ENCODE measurements at regions of chr17 and their contacts with region 1.

Region 1: DNA sequence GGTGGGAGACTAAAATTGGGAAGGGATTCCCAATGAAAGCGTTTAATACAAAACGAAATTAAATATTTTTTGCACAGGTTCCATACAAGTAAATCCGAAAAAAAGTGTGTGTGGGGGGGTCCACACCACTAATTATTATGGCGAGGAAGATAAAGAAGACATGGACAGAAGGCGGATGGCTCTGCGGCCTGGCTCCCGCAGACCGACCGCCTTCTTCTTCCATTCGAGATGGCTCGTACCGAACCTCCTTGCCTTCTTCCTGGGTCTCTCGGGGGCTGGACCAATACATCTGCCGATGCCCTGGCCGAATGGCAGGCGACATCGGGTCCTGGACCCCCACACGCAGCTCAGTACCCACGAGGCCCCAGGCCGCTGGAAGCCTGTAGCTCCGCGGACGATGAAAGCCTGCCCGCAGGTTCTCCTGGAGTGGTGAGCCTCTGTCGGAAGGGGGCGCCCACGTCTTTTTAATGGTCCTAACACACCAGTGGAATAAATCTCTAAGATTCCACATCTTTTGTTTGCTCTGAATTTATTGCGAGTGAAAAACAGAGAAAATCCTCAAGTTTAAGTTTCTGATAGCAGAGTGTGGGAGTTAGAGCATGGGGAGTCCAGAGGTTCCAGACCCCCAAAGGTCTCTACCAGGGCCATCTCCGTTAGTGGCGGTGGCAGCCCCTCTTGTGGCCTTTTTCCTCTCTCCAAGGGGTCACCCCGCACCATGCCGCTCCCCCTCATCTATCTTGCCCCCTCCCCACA is 1.4 kb downstream of the PRAC2 start:
- DNase-seq: peak; percentile 91
- ATAC-seq: peak; percentile 70
- H3K4me3 Mint-ChIP-seq: peak overlapping the region; percentile 40
- H3K27ac Mint-ChIP-seq: no peak overlapping the region
- H3K4me1 Mint-ChIP-seq: peaks cover 29% of the 10 kb centered on the region
- H3K27me3 Mint-ChIP-seq: peaks cover 88% of the 10 kb centered on the region
- CTCF ChIP-seq: peak; percentile 80

Region 2: GRCh38 chr17:48625495-48626244 is 98.8 kb before region 1 on chr17:
- CTCF ChIA-PET with region 1: no interaction called
- POLR2A ChIA-PET with region 1: no interaction called
- intact Hi-C with region 1: no loop called
- DNase-seq: peak; percentile 55
- ATAC-seq: peak; percentile 58
- H3K4me3 Mint-ChIP-seq: peak overlapping the region; percentile 77
- H3K27ac Mint-ChIP-seq: peak overlapping the region; percentile 52
- H3K4me1 Mint-ChIP-seq: peaks cover 8% of the 10 kb centered on the region
- H3K27me3 Mint-ChIP-seq: peaks cover 77% of the 10 kb centered on the region
- CTCF ChIP-seq: no peak

Region 3: GRCh38 chr17:48738803-48739526 is 14.5 kb after region 1 on chr17:
- CTCF ChIA-PET with region 1: interaction called, 82 read pairs
- POLR2A ChIA-PET with region 1: interaction called, 3 read pairs
- intact Hi-C with region 1: no loop called
- DNase-seq: no peak
- ATAC-seq: no peak
- H3K4me3 Mint-ChIP-seq: no peak overlapping the region
- H3K27ac Mint-ChIP-seq: no peak overlapping the region
- H3K4me1 Mint-ChIP-seq: peaks cover 9% of the 10 kb centered on the region
- H3K27me3 Mint-ChIP-seq: peaks cover 87% of the 10 kb centered on the region
- CTCF ChIP-seq: no peak

Region 4: GRCh38 chr17:48751172-48751571 is 26.7 kb after region 1 on chr17:
- CTCF ChIA-PET with region 1: interaction called, 55 read pairs
- POLR2A ChIA-PET with region 1: interaction called, 5 read pairs
- intact Hi-C with region 1: loop called (anchors 5 kb)
- DNase-seq: no peak
- ATAC-seq: no peak
- H3K4me3 Mint-ChIP-seq: no peak overlapping the region
- H3K27ac Mint-ChIP-seq: no peak overlapping the region
- H3K4me1 Mint-ChIP-seq: peaks cover 2% of the 10 kb centered on the region
- H3K27me3 Mint-ChIP-seq: peaks cover 87% of the 10 kb centered on the region
- CTCF ChIP-seq: no peak

Region 5: DNA sequence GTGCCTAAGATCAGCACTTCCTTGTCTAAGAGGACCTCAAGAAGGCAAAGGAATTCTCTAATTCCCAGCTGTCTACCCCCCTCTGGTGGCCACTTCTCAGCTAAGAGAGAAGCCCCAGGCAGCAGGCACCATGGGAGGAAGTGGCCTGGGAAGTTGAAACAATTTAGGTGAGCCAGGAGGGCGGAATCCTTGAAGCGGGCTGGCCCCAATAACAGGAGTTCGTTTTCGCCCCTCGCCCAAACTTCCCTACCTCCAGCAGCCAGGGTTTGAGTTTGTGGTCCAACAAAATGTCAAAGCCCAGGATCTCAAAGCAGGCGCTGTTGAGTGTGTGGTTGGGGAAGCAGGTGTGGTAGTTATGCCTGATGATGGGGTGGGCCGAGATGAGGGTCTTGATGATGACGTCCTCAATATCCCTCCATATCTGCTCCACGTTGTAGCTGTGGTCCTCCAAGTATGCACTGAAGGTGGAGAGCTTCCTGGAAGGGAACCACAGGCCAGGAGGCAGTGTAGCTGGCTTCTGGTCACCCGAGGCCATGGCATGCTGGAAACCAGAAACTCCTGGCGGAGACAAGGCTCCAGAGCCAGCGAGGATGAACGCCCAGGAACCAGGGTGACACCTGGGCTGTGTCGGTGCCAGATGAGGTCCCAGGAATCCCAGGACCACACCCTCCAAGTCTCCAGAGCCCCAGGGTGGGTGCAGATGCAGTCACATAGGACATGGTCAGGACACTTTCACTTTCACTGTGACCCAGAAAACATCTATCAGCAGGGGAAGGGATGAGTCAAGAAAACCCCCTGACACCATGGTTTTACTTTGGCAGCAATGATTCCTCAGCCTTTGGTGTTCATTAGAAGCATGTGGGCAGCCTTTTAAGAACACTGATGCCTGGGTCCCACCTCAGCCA is 67.0 kb after region 1 on chr17:
- CTCF ChIA-PET with region 1: interaction called, 78 read pairs
- POLR2A ChIA-PET with region 1: no interaction called
- intact Hi-C with region 1: loop called (anchors 5 kb)
- DNase-seq: peak; percentile 53
- ATAC-seq: peak; percentile 85
- H3K4me3 Mint-ChIP-seq: no peak overlapping the region
- H3K27ac Mint-ChIP-seq: no peak overlapping the region
- H3K4me1 Mint-ChIP-seq: peaks cover 11% of the 10 kb centered on the region
- H3K27me3 Mint-ChIP-seq: peaks cover 18% of the 10 kb centered on the region
- CTCF ChIP-seq: peak; percentile 40

Region 6: DNA sequence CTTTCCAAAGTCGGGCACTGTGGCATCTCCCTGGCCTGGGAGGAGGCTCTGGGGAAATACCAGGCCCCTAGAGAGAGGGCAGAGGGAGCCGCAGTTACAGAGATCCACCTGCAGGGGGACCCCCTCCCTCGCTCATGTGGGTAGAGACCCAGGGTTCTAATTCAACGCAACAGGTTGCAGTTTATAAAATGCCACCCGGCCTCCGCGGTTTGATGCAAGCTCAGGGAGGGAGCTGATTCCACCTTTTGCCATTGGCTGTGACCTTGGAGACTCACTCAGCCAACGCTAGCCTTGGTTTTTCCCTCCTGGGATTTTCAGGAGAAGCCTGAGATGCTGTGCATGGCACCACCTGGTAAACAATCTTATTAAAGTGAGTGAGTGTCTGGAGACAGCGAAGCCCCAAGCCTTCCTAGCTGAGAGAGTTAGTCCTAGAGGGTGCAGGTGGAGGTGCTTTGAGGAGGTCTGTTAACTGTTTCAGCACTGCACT is 80.5 kb after region 1 on chr17:
- CTCF ChIA-PET with region 1: interaction called, 41 read pairs
- POLR2A ChIA-PET with region 1: no interaction called
- intact Hi-C with region 1: no loop called
- DNase-seq: peak; percentile 75
- ATAC-seq: peak; percentile 100
- H3K4me3 Mint-ChIP-seq: no peak overlapping the region
- H3K27ac Mint-ChIP-seq: no peak overlapping the region
- H3K4me1 Mint-ChIP-seq: no peaks in the 10 kb centered on the region
- H3K27me3 Mint-ChIP-seq: peaks cover 6% of the 10 kb centered on the region
- CTCF ChIP-seq: peak; percentile 98

Region 7: GRCh38 chr17:48892940-48893645 is 168.7 kb after region 1 on chr17:
- CTCF ChIA-PET with region 1: interaction called, 11 read pairs
- POLR2A ChIA-PET with region 1: no interaction called
- intact Hi-C with region 1: no loop called
- DNase-seq: peak; percentile 38
- ATAC-seq: no peak
- H3K4me3 Mint-ChIP-seq: peak overlapping the region; percentile 94
- H3K27ac Mint-ChIP-seq: peak overlapping the region; percentile 98
- H3K4me1 Mint-ChIP-seq: peaks cover 26% of the 10 kb centered on the region
- H3K27me3 Mint-ChIP-seq: no peaks in the 10 kb centered on the region
- CTCF ChIP-seq: no peak

Measured in activated CD8-positive, alpha-beta T cell treated with anti-CD3 and anti-CD28 coated beads for 36 hours (primary cell).